ENCODE measurements at regions of chr22 and their contacts with region 1.

Region 1: GRCh38 chr22:31425331-31426050 is 26.1 kb downstream of the DRG1 start:
- DNase-seq: no peak

Region 2: DNA sequence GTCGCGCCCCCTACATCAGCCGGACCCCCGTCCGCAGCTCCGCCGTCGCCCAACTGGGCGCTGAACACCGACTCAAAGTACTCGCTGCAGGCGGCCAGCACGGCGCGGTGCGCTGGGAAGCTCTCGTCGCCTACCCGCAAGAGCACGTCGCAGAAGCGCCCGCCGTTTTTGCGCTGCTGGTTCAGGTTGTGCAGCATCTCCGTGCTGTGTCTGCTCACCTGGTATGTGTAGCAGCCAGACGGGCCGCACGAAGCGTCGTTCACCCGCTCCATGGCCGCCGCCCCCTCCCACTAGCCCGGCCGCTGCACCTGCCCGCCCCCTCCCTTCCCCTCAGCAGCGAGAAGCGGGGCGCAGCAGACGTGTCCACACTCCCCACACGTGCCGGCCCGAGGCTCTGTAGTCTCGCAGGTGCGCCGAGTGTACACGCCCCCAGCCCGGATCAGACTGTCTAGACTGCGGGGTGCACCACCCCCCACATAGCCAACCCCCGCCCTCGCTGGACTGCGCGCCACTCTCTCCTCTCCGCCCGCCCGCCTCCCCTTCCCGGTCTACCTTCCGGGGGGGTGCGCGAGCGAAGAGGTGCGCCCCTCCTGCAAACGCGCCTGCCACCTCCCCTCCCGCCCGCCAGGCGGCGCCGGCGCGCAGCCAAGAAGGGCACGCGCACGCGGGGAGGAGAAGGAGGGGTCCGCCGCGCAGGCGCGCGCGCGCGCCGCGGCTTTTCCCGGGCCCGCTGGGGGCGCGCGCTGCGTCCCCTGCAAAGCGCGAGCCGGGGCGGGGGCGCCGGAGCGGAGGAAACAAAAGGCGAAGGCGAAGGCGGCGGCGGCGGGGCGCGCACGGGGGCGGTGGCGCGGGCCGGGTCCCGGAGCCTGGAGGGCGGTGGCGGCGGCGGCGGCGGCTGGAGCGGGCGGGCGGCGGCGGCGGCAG is 79.9 kb before region 1 on chr22:
- intact Hi-C with region 1: no loop called
- DNase-seq: peak; percentile 63 to 97 (median 79)

Region 3: GRCh38 chr22:31465307-31465706 is 39.8 kb after region 1 on chr22:
- intact Hi-C with region 1: loop called (anchors 2 kb)
- DNase-seq: no peak

Measured in posterior cingulate gyrus (tissue), 11 donors.